Activated CD4-positive, alpha-beta T cell treated with anti-CD3 and anti-CD28 coated beads for 36 hours (primary cell): ENCODE measurements at regions of chr11 and their contacts with region 1.

Region 1: DNA sequence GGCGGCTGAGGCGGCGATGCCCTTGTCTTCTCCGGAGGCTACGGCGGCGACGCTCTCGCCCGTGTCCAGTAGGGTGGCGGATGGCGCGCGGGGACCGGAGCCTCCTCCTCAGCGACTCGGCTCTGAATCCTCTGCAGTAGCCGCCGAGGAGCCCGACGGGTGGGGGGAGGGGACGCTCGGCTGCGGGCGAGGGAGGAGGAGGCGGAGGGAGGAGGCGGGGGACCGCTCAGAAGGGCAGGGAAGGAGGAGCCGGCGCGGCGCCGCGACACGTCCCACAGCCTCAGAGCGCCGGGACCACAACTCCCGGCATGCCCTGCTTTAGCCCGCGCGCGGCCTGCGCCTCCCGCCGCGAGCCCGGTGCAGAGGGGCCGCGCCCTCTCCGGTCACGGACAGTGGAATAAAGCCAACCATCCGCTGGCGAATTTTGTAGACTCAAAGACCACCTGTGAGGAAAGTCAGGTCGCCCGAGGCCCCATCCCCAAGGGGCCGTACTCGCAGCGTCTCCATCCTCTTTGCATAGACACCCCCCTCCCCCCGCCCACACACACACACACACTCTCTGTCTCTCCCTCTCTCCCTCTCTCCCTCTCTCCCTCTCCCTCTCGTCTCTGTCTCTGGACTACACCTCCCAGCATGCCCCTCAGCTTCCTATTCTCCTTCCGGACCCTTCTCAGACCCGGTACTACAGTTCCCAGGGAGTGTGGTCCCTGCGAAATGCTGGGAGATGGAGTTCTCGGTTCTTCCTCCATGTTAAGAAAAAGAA is at the start of gene FAM168A:
- DNase-seq: peak; percentile 97
- ATAC-seq: peak; percentile 94
- H3K4me3 Mint-ChIP-seq: peak within 1 kb of the TSS; percentile 87
- H3K27ac Mint-ChIP-seq: peak within 1 kb of the TSS; percentile 92
- H3K4me1 Mint-ChIP-seq: peaks cover 34% of the 10 kb centered on the region
- H3K27me3 Mint-ChIP-seq: no peaks in the 10 kb centered on the region
- total RNA-seq, gene FAM168A: 12.7 to 17.5 TPM

Region 2: DNA sequence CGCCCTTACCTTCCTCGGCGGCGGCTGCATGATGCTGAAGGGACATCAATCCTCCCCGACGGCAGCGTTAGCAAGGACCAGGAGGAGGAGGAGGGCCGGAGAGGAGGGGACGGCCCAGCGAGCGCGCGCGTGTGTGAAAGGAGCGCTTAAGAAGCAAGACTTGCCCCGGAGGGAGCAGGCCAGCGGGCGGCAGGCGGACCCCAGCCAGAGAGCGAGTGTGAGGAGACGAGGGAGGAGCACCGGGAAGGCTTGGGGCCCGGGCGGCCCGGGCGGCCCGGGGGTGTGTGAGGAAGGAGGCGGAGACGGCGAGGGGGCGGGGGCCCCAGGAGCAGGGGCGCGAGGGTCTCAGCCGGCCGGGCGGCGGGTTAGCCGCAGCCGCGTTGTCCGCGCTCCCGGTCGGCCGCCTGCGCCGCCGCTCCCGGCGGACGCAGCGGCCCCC is 456.3 kb before region 1 on chr11:
- CTCF ChIA-PET with region 1: interaction called, 4 read pairs
- POLR2A ChIA-PET with region 1: no interaction called
- intact Hi-C with region 1: loop called in 1 of 2 experiments (anchors 5 kb)
- DNase-seq: peak; percentile 73
- ATAC-seq: peak; percentile 17
- H3K4me3 Mint-ChIP-seq: peak overlapping the region; percentile 92
- H3K27ac Mint-ChIP-seq: peak overlapping the region; percentile 82
- H3K4me1 Mint-ChIP-seq: peaks cover 40% of the 10 kb centered on the region
- H3K27me3 Mint-ChIP-seq: no peaks in the 10 kb centered on the region

Region 3: DNA sequence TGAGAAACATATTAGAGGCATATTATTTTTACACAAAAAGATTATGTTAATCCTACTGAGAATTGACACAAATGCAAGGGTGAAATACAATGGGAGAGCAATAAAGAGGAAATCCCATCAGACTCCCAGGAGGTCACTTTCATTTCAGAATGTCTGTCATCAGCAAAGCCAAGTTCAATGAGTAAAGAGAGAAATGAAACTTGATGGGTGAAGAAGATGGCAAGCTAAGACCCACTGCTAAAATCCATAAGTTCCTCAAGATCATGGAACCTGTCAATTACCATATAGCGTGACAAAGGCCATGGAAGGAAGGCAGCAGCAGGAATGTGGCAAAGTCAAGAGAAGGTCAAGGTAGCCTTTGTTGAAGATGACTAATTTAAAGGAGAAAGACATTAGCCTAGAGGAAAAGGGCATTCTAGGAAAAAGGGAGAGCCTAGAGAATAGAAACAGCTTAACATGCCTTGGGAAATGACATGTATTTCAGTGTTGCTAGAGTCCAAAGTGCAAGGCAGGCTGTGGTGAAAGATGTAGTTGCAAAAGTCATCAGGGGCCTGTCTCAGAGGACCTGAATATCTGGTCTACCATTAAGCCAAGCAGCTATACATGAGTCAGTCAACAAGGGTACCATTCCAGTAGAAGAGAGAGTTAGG is 43.3 kb before region 1 on chr11:
- CTCF ChIA-PET with region 1: no interaction called
- POLR2A ChIA-PET with region 1: no interaction called
- intact Hi-C with region 1: no loop called
- DNase-seq: no peak
- ATAC-seq: no peak
- H3K4me3 Mint-ChIP-seq: no peak overlapping the region
- H3K27ac Mint-ChIP-seq: no peak overlapping the region
- H3K4me1 Mint-ChIP-seq: peaks cover 18% of the 10 kb centered on the region
- H3K27me3 Mint-ChIP-seq: no peaks in the 10 kb centered on the region

Region 4: DNA sequence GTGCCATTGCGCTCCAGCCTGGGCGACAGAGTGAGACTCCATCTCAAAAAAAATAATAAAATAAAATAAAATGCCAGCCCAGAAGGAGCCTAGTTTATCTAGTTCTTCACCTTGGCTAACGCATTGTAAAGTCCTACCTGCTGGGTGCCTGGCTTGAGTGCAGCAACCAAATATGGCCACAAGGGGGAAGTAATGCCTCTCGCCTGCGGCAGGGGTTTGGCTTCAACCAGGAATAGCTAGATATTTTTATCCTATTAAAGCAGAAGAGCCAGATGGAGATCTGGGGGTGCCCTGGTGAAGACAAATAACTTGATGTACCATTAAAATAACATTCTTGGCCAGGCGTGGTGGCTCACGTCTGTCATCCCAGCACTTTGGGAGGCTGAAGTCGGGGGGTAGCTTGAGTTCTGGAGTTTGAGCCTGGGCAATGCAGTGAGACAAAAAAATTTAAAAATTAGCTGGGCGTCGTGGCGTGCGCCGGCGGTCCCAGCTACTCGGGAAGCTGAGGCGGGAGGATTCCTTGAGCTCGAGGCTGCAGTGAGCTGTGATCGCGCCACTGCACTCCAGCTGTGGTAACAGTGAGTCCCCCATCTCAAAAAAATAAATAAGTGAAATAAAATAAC is 27.7 kb after region 1 on chr11:
- CTCF ChIA-PET with region 1: interaction called, 12 read pairs
- POLR2A ChIA-PET with region 1: no interaction called
- intact Hi-C with region 1: no loop called
- DNase-seq: peak; percentile 81
- ATAC-seq: peak; percentile 91
- H3K4me3 Mint-ChIP-seq: no peak overlapping the region
- H3K27ac Mint-ChIP-seq: no peak overlapping the region
- H3K4me1 Mint-ChIP-seq: no peaks in the 10 kb centered on the region
- H3K27me3 Mint-ChIP-seq: peaks cover 8% of the 10 kb centered on the region

Region 5: GRCh38 chr11:73779084-73779902 is 181.2 kb after region 1 on chr11:
- CTCF ChIA-PET with region 1: no interaction called
- POLR2A ChIA-PET with region 1: no interaction called
- intact Hi-C with region 1: loop called in 1 of 2 experiments (anchors 1 kb)
- DNase-seq: peak; percentile 100
- ATAC-seq: peak; percentile 97
- H3K4me3 Mint-ChIP-seq: peak overlapping the region; percentile 80
- H3K27ac Mint-ChIP-seq: peak overlapping the region; percentile 98
- H3K4me1 Mint-ChIP-seq: peaks cover 10% of the 10 kb centered on the region
- H3K27me3 Mint-ChIP-seq: no peaks in the 10 kb centered on the region

Region 6: GRCh38 chr11:74138572-74138971 is 540.4 kb after region 1 on chr11:
- CTCF ChIA-PET with region 1: no interaction called
- POLR2A ChIA-PET with region 1: no interaction called
- intact Hi-C with region 1: no loop called
- DNase-seq: no peak
- ATAC-seq: no peak
- H3K4me3 Mint-ChIP-seq: no peak overlapping the region
- H3K27ac Mint-ChIP-seq: no peak overlapping the region
- H3K4me1 Mint-ChIP-seq: no peaks in the 10 kb centered on the region
- H3K27me3 Mint-ChIP-seq: no peaks in the 10 kb centered on the region

Region 7: DNA sequence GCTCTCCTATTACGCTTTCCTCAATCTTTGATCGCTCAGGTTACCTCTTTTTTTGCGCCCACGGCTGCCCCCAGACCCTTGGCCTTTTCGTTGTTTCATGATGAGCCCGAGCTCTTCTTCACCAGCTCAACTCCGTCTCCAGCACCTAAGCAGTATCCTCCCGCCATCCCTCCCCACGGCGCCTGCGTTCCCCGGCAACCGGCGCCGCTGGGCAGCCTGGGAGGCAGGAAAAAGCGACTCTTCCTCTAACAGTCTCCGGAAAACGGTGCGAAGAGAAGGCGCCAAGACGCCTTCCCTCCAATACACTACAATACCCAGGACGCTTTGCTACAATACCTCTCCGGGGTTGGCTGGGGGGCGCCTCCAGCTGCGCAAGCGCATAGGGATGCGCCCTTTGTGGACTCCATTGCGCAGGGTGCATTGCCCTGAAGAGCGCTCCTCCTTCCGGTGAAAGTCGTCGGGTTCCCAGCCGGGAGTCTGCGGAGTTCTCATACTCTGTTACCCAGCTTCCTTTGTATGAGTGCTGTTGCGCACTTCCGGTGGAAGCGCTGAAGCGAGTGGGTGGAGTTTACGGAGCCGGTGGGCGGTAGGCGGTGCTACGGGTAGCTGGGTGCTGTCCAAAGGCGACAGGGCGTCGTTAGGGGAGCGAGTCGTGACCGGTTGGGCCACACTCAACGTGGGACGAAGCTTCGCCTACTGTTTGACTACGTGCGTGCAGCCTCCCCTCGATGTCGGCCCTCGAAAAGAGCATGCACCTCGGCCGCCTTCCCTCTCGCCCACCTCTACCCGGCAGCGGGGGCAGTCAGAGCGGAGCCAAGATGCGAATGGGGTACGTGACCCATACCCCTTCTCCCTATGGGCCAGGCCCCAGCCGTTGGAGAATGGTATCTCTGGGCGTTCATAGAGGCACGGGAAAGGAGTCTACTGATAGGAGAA is 572.8 kb after region 1 on chr11 and contains the starts of genes C2CD3 and PPME1:
- CTCF ChIA-PET with region 1: no interaction called
- POLR2A ChIA-PET with region 1: no interaction called
- intact Hi-C with region 1: loop called (anchors 1 kb)
- DNase-seq: peak; percentile 98
- ATAC-seq: peak; percentile 96
- H3K4me3 Mint-ChIP-seq: no peak within 1 kb of the TSS
- H3K27ac Mint-ChIP-seq: no peak within 1 kb of the TSS
- H3K4me1 Mint-ChIP-seq: peaks cover 16% of the 10 kb centered on the region
- H3K27me3 Mint-ChIP-seq: no peaks in the 10 kb centered on the region
- total RNA-seq, gene C2CD3: 23.9 to 28.0 TPM
- total RNA-seq, gene PPME1: 54.2 to 61.5 TPM

Region 8: GRCh38 chr11:74592441-74593362 is 994.6 kb after region 1 on chr11 and contains the start of gene POLD3:
- CTCF ChIA-PET with region 1: no interaction called
- POLR2A ChIA-PET with region 1: no interaction called
- intact Hi-C with region 1: loop called in 1 of 2 experiments (anchors 5 kb)
- DNase-seq: peak; percentile 98
- ATAC-seq: peak; percentile 96
- H3K4me3 Mint-ChIP-seq: peak within 1 kb of the TSS; percentile 93
- H3K27ac Mint-ChIP-seq: peak within 1 kb of the TSS; percentile 96
- H3K4me1 Mint-ChIP-seq: peaks cover 27% of the 10 kb centered on the region
- H3K27me3 Mint-ChIP-seq: no peaks in the 10 kb centered on the region
- total RNA-seq, gene POLD3: 70.0 to 79.8 TPM